Endothelial cell of umbilical vein (primary cell): ENCODE measurements at regions of chr3 and their contacts with region 1.

Region 1: GRCh38 chr3:169497567-169498257 is 165.8 kb downstream of the MECOM start:
- DNase-seq: peak; percentile 94
- H3K4me3 ChIP-seq: no peak overlapping the region
- H3K27ac ChIP-seq: peak overlapping the region; percentile 100
- H3K4me1 ChIP-seq: peaks cover 73% of the 10 kb centered on the region
- H3K27me3 ChIP-seq: no peaks in the 10 kb centered on the region
- CTCF ChIP-seq: no peak
- POLR2A ChIP-seq: no peak

Region 2: DNA sequence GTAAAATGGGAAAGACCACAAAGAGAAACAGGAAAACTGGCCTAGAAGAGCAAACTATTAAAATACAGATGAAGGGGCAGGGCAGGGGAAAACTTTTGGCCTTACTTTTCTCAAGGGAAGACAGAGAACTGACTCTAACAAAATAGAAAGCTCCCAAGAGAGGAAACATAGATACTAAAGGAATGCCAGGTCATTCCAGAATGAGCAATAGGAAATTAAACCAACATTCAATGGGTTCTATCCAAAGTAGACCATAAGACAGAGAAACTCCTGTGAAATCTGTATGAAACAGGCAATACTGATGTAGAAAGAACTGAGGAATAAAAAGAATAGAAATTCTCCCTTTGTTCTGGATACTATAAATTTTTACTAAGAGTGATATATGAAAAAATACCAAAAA is 326.0 kb before region 1 on chr3:
- CTCF ChIA-PET with region 1: no interaction called
- POLR2A ChIA-PET with region 1: no interaction called
- dilution Hi-C with region 1: no loop called
- intact Hi-C with region 1: no loop called
- DNase-seq: peak; percentile 37
- H3K4me3 ChIP-seq: no peak overlapping the region
- H3K27ac ChIP-seq: no peak overlapping the region
- H3K4me1 ChIP-seq: peaks cover 10% of the 10 kb centered on the region
- H3K27me3 ChIP-seq: no peaks in the 10 kb centered on the region
- CTCF ChIP-seq: no peak
- POLR2A ChIP-seq: no peak

Region 3: GRCh38 chr3:169218314-169218983 is 279.3 kb before region 1 on chr3:
- CTCF ChIA-PET with region 1: no interaction called
- POLR2A ChIA-PET with region 1: no interaction called
- dilution Hi-C with region 1: no loop called
- intact Hi-C with region 1: loop called (anchors 1 kb)
- DNase-seq: peak; percentile 98
- H3K4me3 ChIP-seq: no peak overlapping the region
- H3K27ac ChIP-seq: peak overlapping the region; percentile 66
- H3K4me1 ChIP-seq: peaks cover 23% of the 10 kb centered on the region
- H3K27me3 ChIP-seq: no peaks in the 10 kb centered on the region
- CTCF ChIP-seq: peak; percentile 74 to 89
- POLR2A ChIP-seq: no peak

Region 4: GRCh38 chr3:169390271-169391230 is 107.2 kb before region 1 on chr3:
- CTCF ChIA-PET with region 1: interaction called, 16 read pairs
- POLR2A ChIA-PET with region 1: interaction called, 4 read pairs
- dilution Hi-C with region 1: no loop called
- intact Hi-C with region 1: loop called (anchors 1 kb)
- DNase-seq: peak; percentile 80
- H3K4me3 ChIP-seq: no peak overlapping the region
- H3K27ac ChIP-seq: peak overlapping the region; percentile 88
- H3K4me1 ChIP-seq: peaks cover 45% of the 10 kb centered on the region
- H3K27me3 ChIP-seq: no peaks in the 10 kb centered on the region
- CTCF ChIP-seq: peak; percentile 15 to 25
- POLR2A ChIP-seq: no peak

Region 5: GRCh38 chr3:169460035-169460434 is 37.7 kb before region 1 on chr3:
- CTCF ChIA-PET with region 1: interaction called, 3 read pairs
- POLR2A ChIA-PET with region 1: no interaction called
- dilution Hi-C with region 1: no loop called
- intact Hi-C with region 1: loop called (anchors 1 kb)
- DNase-seq: peak; percentile 91
- H3K4me3 ChIP-seq: no peak overlapping the region
- H3K27ac ChIP-seq: peak overlapping the region; percentile 18
- H3K4me1 ChIP-seq: peaks cover 33% of the 10 kb centered on the region
- H3K27me3 ChIP-seq: no peaks in the 10 kb centered on the region
- CTCF ChIP-seq: no peak
- POLR2A ChIP-seq: no peak

Region 6: GRCh38 chr3:169526246-169526645 is 28.5 kb after region 1 on chr3:
- CTCF ChIA-PET with region 1: interaction called, 4 read pairs
- POLR2A ChIA-PET with region 1: no interaction called
- dilution Hi-C with region 1: no loop called
- intact Hi-C with region 1: loop called (anchors 1 kb)
- DNase-seq: peak; percentile 75
- H3K4me3 ChIP-seq: no peak overlapping the region
- H3K27ac ChIP-seq: peak overlapping the region; percentile 71
- H3K4me1 ChIP-seq: peaks cover 40% of the 10 kb centered on the region
- H3K27me3 ChIP-seq: no peaks in the 10 kb centered on the region
- CTCF ChIP-seq: no peak
- POLR2A ChIP-seq: no peak

Region 7: DNA sequence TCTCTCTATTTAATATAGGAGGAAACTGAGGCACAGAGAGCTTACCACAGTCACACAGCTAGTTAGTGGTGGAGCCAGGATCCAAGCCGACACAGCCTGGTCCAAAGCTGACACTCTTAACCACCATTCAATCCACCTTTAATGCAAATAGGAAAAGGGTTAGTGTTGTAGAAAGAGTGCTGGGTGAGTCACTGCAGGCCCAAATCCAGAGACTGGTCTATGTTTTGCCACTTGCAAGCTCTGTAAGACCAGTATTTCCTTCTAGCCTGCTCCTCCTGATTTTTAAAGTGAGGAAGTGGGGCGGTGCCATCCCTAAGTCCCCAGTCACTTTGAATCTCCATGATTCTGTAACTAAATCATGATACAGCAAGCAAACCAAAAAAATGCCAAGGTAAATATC is 54.8 kb after region 1 on chr3:
- CTCF ChIA-PET with region 1: no interaction called
- POLR2A ChIA-PET with region 1: no interaction called
- dilution Hi-C with region 1: no loop called
- intact Hi-C with region 1: no loop called
- DNase-seq: no peak
- H3K4me3 ChIP-seq: no peak overlapping the region
- H3K27ac ChIP-seq: no peak overlapping the region
- H3K4me1 ChIP-seq: peaks cover 14% of the 10 kb centered on the region
- H3K27me3 ChIP-seq: no peaks in the 10 kb centered on the region
- CTCF ChIP-seq: no peak
- POLR2A ChIP-seq: no peak

Region 8: DNA sequence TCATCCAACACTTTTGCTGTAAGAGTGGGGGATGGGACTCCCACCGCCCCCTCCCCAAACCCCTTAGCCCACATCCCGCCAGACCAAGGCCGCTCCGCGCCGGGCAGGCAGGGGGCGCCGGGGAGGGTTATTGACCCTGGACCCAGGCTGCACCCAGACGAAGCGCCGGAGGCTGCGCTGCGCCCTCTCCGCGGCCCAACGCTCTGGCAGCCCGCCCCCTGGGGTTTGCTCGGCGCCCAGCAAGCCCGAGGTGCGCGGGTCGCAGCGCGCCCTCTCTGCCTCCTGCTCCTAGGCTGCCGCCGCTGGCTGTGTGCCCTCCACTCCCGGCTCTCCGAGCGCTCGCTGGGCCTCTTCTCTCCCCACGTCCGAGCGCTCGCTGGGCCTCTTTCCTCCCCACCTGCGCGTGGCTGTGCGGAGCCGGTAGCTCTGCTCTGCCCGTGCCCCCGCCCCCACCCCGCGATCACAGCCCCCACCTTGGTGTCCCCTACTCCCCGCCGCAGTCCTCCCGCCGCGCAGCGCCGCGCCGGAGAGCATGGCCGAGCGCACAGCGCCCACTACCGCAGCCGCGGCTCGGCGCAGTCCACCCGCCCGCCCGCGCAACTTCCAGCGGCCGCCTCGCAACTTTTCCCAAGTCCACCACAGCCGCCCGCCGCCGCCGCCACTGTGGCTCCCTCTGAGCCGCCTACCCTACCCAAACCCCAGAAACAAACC is 164.6 kb after region 1 on chr3:
- CTCF ChIA-PET with region 1: interaction called, 9 read pairs
- POLR2A ChIA-PET with region 1: interaction called, 3 read pairs
- dilution Hi-C with region 1: no loop called
- intact Hi-C with region 1: loop called (anchors 1 kb)
- DNase-seq: peak; percentile 84
- H3K4me3 ChIP-seq: peak overlapping the region; percentile 23 to 77 (median 64)
- H3K27ac ChIP-seq: peak overlapping the region; percentile 81
- H3K4me1 ChIP-seq: peaks cover 66% of the 10 kb centered on the region
- H3K27me3 ChIP-seq: no peaks in the 10 kb centered on the region
- CTCF ChIP-seq: peak; percentile 46 to 77
- POLR2A ChIP-seq: peak; percentile 55